ENCODE measurements at regions of chr22 and their contacts with region 1.

Region 1: DNA sequence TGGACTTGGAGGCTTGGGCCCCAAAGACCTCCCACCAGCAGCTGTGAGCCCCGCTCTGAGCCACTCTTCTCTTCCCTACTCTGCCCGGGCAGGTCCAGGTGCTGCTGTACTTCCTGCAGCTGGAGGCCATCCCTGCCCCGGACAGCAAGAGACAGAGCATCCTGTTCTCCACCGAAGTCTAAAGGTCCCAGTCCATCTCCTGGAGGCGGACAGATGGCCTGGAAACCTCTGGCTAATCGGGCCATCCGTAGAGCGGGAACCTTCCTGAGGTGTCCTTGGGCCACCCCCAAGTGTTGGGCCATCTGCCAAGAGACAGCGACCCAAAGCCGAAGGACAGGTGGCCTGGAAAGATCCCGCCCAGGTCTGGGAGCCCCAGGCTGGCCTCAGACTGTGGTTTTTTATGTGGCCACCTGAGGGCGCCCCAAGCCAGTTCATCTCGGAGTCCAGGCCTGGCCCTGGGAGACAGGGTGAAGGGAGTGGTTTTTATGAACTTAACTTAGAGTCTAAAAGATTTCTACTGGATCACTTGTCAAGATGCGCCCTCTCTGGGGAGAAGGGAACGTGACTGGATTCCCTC is 135.1 kb downstream of the BCR start:
- DNase-seq: no peak
- ATAC-seq: peak; percentile 33; the same call in 1 of the 3 replicates
- H3K4me3 ChIP-seq: no peak overlapping the region
- H3K27ac ChIP-seq: no peak overlapping the region
- H3K4me1 ChIP-seq: no peaks in the 10 kb centered on the region
- H3K27me3 ChIP-seq: no peaks in the 10 kb centered on the region
- CTCF ChIP-seq: peak; percentile 56 to 62 (median 61); a peak in 5 of 6 replicates
- EP300 ChIP-seq: no peak
- POLR2A ChIP-seq: no peak
- RAD21 ChIP-seq: peak; percentile 76

Region 2: DNA sequence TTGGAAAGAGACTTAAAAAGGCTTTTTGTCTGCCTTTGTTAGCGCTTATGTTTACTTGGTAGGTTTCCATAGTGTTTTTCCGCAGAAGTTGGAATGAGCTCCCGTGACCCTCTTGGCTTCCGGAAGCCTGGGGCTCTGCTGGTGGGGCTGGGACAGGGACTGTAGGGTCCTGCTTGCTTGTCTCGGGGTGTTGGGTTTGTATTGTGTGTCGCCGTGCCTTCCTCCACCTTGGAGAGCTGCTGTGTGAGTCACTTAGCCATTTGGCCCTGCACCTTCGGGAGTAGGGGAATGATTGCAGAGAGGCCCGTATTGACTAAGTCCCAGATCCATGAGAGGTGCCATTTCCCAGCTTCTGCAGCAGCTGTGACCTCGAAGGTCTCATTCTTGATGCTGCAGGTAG is 22.5 kb before region 1 on chr22:
- CTCF ChIA-PET with region 1: no interaction called
- POLR2A ChIA-PET with region 1: no interaction called
- RAD21 ChIA-PET with region 1: no interaction called
- SMC1A ChIA-PET with region 1: no interaction called
- in situ Hi-C with region 1: no loop called
- intact Hi-C with region 1: no loop called
- DNase-seq: no peak
- ATAC-seq: no peak
- H3K4me3 ChIP-seq: no peak overlapping the region
- H3K27ac ChIP-seq: no peak overlapping the region; the same call in 1 of the 2 replicates
- H3K4me1 ChIP-seq: peaks cover 9% of the 10 kb centered on the region
- H3K27me3 ChIP-seq: no peaks in the 10 kb centered on the region
- CTCF ChIP-seq: no peak
- EP300 ChIP-seq: no peak
- POLR2A ChIP-seq: no peak
- RAD21 ChIP-seq: no peak

Region 3: GRCh38 chr22:23539135-23539838 is 223.9 kb after region 1 on chr22:
- CTCF ChIA-PET with region 1: no interaction called
- POLR2A ChIA-PET with region 1: no interaction called
- RAD21 ChIA-PET with region 1: no interaction called
- SMC1A ChIA-PET with region 1: no interaction called
- in situ Hi-C with region 1: no loop called
- intact Hi-C with region 1: loop called (anchors 10 kb)
- DNase-seq: peak; percentile 36
- ATAC-seq: peak; percentile 100
- H3K4me3 ChIP-seq: no peak overlapping the region
- H3K27ac ChIP-seq: no peak overlapping the region
- H3K4me1 ChIP-seq: no peaks in the 10 kb centered on the region
- H3K27me3 ChIP-seq: peaks cover 0 to 2% of the 10 kb centered on the region in 2 experiments; a peak in 2 of 4 replicates
- CTCF ChIP-seq: peak; percentile 78 to 90 (median 85)
- EP300 ChIP-seq: no peak
- POLR2A ChIP-seq: no peak
- RAD21 ChIP-seq: peak; percentile 86

Measured in GM12878 (cell line).